MCF 10A (cell line): ENCODE measurements at regions of chr5 and their contacts with region 1.

Region 1: GRCh38 chr5:131263648-131264450 is at the start of gene CDC42SE2:
- DNase-seq: peak; percentile 93
- H3K4me3 Mint-ChIP-seq: peak within 1 kb of the TSS; percentile 92
- H3K27ac Mint-ChIP-seq: peak within 1 kb of the TSS; percentile 89
- H3K4me1 Mint-ChIP-seq: peaks cover 31% of the 10 kb centered on the region
- H3K27me3 Mint-ChIP-seq: no peaks in the 10 kb centered on the region
- CTCF ChIP-seq: no peak
- total RNA-seq, gene CDC42SE2: 71.0 and 96.4 TPM in 2 replicates

Region 2: DNA sequence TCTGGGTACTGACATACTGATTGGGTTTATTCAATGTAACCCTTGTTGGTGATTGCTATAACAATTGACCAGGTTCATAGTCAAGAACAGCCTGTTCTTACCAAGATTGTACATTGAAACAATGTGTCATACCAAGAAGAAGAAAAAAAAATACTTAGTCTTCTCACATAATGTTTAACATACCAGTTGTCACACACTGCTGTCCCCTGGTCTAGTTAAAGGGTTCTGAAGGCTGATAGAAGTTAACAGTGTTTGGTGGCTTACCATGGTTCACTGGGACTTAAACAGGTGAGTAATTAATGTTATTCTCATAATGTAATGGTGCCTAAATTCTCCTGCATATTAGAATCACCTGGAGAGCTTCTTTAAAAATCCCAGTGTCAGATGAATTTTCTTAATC is 18.5 kb before region 1 on chr5:
- CTCF ChIA-PET with region 1: interaction called, 7 read pairs
- POLR2A ChIA-PET with region 1: interaction called, 11 read pairs
- intact Hi-C with region 1: no loop called
- DNase-seq: no peak
- H3K4me3 Mint-ChIP-seq: no peak overlapping the region
- H3K27ac Mint-ChIP-seq: no peak overlapping the region
- H3K4me1 Mint-ChIP-seq: peaks cover 11% of the 10 kb centered on the region
- H3K27me3 Mint-ChIP-seq: no peaks in the 10 kb centered on the region
- CTCF ChIP-seq: no peak

Region 3: GRCh38 chr5:131289738-131290137 is 25.9 kb after region 1 on chr5:
- CTCF ChIA-PET with region 1: interaction called, 5 read pairs
- POLR2A ChIA-PET with region 1: interaction called, 37 read pairs
- intact Hi-C with region 1: no loop called
- DNase-seq: no peak
- H3K4me3 Mint-ChIP-seq: no peak overlapping the region
- H3K27ac Mint-ChIP-seq: peak overlapping the region; percentile 39
- H3K4me1 Mint-ChIP-seq: peaks cover 16% of the 10 kb centered on the region
- H3K27me3 Mint-ChIP-seq: no peaks in the 10 kb centered on the region
- CTCF ChIP-seq: no peak

Region 4: DNA sequence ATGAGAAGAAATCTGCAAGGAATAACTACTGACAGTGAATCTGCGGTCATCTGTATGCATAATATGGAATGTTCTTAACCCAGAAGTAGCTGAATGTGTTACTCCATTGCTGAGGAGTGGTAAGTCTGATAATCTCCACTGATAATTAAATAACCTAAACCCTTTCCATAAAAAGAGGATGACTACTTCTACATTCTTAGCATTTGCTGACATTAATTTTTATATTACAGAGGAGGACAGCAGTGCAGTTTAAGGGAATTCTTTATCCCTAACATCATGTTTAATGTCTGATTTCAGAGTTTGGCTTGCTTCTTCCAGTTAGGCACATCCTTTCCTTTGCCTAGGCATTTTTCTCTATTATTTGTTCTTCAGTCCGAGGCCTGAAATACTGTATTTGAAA is 52.2 kb after region 1 on chr5:
- CTCF ChIA-PET with region 1: interaction called, 21 read pairs
- POLR2A ChIA-PET with region 1: interaction called, 151 read pairs
- intact Hi-C with region 1: no loop called
- DNase-seq: no peak
- H3K4me3 Mint-ChIP-seq: no peak overlapping the region
- H3K27ac Mint-ChIP-seq: peak overlapping the region; percentile 98
- H3K4me1 Mint-ChIP-seq: peaks cover 39% of the 10 kb centered on the region
- H3K27me3 Mint-ChIP-seq: no peaks in the 10 kb centered on the region
- CTCF ChIP-seq: no peak

Region 5: GRCh38 chr5:131382407-131383395 is 118.9 kb after region 1 on chr5:
- CTCF ChIA-PET with region 1: interaction called, 34 read pairs
- POLR2A ChIA-PET with region 1: interaction called, 40 read pairs
- intact Hi-C with region 1: loop called (anchors 1 kb)
- DNase-seq: peak; percentile 81
- H3K4me3 Mint-ChIP-seq: no peak overlapping the region
- H3K27ac Mint-ChIP-seq: no peak overlapping the region
- H3K4me1 Mint-ChIP-seq: peaks cover 29% of the 10 kb centered on the region
- H3K27me3 Mint-ChIP-seq: no peaks in the 10 kb centered on the region
- CTCF ChIP-seq: peak; percentile 50